Activated CD8-positive, alpha-beta T cell treated with anti-CD3 and anti-CD28 coated beads, Interleukin-2, amount 10 ng/mL, durations not matched to agents 7 days and 5 days (primary cell): ENCODE measurements at regions of chr5 and their contacts with region 1.

Region 1: DNA sequence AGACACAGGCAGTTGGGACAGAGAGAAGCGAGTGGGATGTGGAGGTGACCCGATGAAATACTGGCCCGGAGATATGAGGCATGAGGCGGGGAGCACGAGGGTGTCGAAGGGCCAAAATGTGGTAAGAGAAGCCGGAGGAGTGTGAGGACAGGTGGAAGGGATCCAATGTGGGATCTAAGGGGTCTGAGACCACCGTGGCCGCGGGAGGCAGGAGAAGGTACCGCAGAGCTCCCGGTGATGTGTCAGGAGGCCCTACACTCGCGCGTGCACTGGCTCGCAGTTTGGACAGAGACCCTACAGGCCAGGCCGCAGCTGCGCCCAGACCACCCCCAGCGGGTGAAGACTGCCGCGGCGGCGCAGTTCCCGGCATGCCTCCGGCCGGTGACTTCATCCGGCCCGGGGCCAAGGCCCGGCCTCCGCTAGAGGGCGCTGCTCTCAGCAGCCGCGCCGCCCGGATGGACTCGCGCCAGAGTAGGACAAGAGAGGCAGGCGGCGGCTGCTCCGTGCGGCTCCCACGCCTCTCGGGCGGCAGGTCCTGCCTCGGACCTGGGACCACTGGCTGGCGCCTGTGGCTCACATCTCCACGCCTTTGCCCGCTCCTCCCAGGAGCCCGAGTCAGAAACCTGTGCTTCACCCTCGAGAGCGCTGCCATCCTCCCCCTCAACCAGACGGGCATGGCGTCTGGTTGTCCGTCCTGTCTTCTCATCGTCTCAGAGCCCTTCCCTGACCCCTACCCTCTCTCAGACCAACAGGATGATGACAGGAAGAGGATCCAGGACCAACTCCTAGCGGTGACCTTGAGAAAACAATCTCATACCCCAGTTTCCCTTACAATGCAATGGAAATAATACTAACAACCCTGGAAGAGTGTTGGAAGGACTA is 35.4 kb upstream of the STING1 start:
- DNase-seq: peak; percentile 91
- ATAC-seq: peak; percentile 97
- H3K4me3 Mint-ChIP-seq: peak overlapping the region; percentile 75
- H3K27ac Mint-ChIP-seq: peak overlapping the region; percentile 88
- H3K4me1 Mint-ChIP-seq: peaks cover 26% of the 10 kb centered on the region
- H3K27me3 Mint-ChIP-seq: peaks cover 2% of the 10 kb centered on the region

Region 2: GRCh38 chr5:139439013-139439903 is 78.7 kb before region 1 on chr5 and contains the start of gene DNAJC18:
- CTCF ChIA-PET with region 1: interaction called, 10 read pairs
- POLR2A ChIA-PET with region 1: no interaction called
- DNase-seq: peak; percentile 91
- ATAC-seq: peak; percentile 93
- H3K4me3 Mint-ChIP-seq: peak within 1 kb of the TSS; percentile 97
- H3K27ac Mint-ChIP-seq: peak within 1 kb of the TSS; percentile 98
- H3K4me1 Mint-ChIP-seq: peaks cover 50% of the 10 kb centered on the region
- H3K27me3 Mint-ChIP-seq: peaks cover 14% of the 10 kb centered on the region
- total RNA-seq, gene DNAJC18: 3.7 to 5.4 TPM

Region 3: GRCh38 chr5:139446956-139447779 is 70.8 kb before region 1 on chr5:
- CTCF ChIA-PET with region 1: interaction called, 11 read pairs
- POLR2A ChIA-PET with region 1: no interaction called
- DNase-seq: no peak
- ATAC-seq: no peak
- H3K4me3 Mint-ChIP-seq: no peak overlapping the region
- H3K27ac Mint-ChIP-seq: no peak overlapping the region
- H3K4me1 Mint-ChIP-seq: peaks cover 45% of the 10 kb centered on the region
- H3K27me3 Mint-ChIP-seq: peaks cover 16% of the 10 kb centered on the region

Region 4: GRCh38 chr5:139458580-139459406 is 59.1 kb before region 1 on chr5:
- CTCF ChIA-PET with region 1: interaction called, 18 read pairs
- POLR2A ChIA-PET with region 1: no interaction called
- DNase-seq: peak; percentile 92
- ATAC-seq: peak; percentile 92
- H3K4me3 Mint-ChIP-seq: peak overlapping the region; percentile 67
- H3K27ac Mint-ChIP-seq: peak overlapping the region; percentile 97
- H3K4me1 Mint-ChIP-seq: peaks cover 63% of the 10 kb centered on the region
- H3K27me3 Mint-ChIP-seq: peaks cover 14% of the 10 kb centered on the region

Region 5: DNA sequence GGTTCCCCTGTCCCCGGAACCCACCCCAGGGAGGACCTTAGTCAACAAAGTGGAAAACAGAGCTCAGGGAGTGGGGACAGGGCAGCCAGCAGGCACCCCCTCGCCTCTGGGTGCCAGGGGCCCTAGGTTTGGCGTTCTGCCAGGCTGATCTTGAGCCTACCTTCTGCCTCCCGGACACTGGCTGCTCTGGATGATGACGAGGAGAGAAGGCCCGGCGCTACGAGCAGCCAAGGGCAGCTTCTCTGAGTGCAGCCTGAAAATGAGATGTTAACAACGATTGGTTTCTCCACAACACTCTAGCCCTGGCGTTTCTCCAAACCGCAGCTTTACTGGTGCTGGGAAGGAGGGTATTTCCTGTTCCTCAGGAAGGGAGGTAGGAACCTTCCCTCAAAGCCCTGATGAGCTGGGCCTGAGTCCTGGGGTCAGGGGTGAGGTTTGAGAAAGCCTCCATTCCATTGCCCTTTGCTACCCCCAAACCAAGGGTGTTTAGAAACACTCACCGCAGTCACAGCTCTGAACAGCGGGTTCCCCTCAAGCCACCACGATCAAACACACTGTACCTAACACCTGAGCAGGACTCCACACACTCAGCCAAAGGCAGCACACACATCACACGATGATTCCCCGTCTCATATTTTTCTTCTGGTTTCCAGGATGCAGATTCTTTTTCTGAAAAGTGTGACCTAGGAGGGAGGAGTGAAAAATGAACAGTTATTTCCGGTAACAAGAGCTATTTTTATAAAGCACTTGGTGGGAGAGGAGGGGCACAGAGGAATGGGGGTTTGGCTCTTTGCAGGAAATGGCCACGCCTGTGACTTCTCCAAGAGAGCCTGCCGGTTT is 35.7 kb before region 1 on chr5 and contains the start of gene STING1:
- CTCF ChIA-PET with region 1: interaction called, 43 read pairs
- POLR2A ChIA-PET with region 1: interaction called, 3 read pairs
- DNase-seq: peak; percentile 76
- ATAC-seq: peak; percentile 90
- H3K4me3 Mint-ChIP-seq: peak within 1 kb of the TSS; percentile 79
- H3K27ac Mint-ChIP-seq: peak within 1 kb of the TSS; percentile 94
- H3K4me1 Mint-ChIP-seq: peaks cover 38% of the 10 kb centered on the region
- H3K27me3 Mint-ChIP-seq: no peaks in the 10 kb centered on the region
- total RNA-seq, gene STING1: 64.9 to 67.4 TPM

Region 6: DNA sequence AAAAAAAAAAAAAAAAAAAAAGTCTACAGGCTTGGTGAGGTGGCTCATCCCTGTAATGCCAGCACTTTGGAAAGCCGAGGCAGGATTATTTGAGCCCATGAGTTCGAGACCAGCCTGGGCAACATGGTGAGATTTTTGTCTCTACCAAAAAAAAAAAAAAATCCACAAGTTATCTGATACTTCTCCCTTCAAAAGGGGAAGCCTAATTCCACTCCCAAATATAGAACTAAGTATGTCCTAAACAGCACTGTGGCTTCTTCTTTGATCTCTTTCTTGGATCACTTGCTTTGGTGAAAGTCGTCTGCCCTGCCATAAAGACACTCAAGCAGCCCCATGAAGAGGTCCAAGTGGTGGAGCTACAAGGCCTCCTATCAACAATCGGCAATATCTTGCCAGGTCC is 16.5 kb before region 1 on chr5:
- CTCF ChIA-PET with region 1: interaction called, 24 read pairs
- POLR2A ChIA-PET with region 1: no interaction called
- DNase-seq: no peak
- ATAC-seq: no peak
- H3K4me3 Mint-ChIP-seq: no peak overlapping the region
- H3K27ac Mint-ChIP-seq: no peak overlapping the region
- H3K4me1 Mint-ChIP-seq: no peaks in the 10 kb centered on the region
- H3K27me3 Mint-ChIP-seq: peaks cover 19% of the 10 kb centered on the region